Endothelial cell of umbilical vein (primary cell): ENCODE measurements at regions of chr6 and their contacts with region 1.

Region 1: DNA sequence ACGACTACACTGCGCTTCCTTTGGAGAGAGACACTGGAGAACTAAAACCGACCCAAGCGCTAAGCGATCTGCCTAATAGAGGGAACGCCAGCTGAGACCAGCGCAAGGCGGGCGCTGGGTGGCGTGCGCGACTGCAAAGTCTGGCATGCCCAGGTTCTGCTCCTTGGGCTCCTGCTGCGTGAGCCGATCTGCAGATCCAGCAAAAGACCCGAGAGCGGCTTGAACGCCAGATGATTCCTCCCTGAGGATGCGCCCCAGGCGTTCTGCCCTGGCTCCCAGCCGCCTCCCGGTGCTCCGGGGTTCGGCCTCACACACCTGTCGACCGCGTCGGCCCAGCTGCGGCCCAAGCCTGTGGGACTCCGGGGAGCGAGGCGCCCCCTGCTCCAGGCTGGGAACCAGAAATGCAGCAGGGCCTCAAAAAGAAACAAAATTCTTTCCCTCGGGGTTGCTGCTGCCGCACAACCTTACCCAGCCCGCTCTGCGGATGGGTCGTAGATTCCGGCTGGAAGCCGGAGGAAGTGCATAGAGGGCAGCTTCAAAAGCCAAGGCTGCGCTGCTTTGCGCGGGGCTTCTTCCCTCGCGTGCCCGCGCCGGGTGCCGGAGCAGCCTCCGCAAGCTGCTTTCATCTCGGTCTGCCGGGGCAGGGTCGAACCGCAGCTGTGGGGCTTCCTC is 17.9 kb upstream of the PRDM13 start:
- DNase-seq: peak; percentile 72
- H3K4me3 ChIP-seq: peak overlapping the region; percentile 11 to 40 (median 37)
- H3K27ac ChIP-seq: no peak overlapping the region
- H3K4me1 ChIP-seq: peaks cover 8% of the 10 kb centered on the region
- H3K27me3 ChIP-seq: peaks cover 71 to 77% of the 10 kb centered on the region in 2 experiments
- CTCF ChIP-seq: peak; percentile 36 to 69
- POLR2A ChIP-seq: no peak

Region 2: GRCh38 chr6:98834060-98835031 is 754.4 kb before region 1 on chr6 and contains the start of gene POU3F2:
- CTCF ChIA-PET with region 1: no interaction called
- POLR2A ChIA-PET with region 1: no interaction called
- dilution Hi-C with region 1: no loop called
- intact Hi-C with region 1: loop called (anchors 10 kb)
- DNase-seq: peak; percentile 90
- H3K4me3 ChIP-seq: peak within 1 kb of the TSS; percentile 8 to 40 (median 34)
- H3K27ac ChIP-seq: no peak within 1 kb of the TSS
- H3K4me1 ChIP-seq: peaks cover 9% of the 10 kb centered on the region
- H3K27me3 ChIP-seq: peaks cover 74 to 94% of the 10 kb centered on the region in 2 experiments
- CTCF ChIP-seq: no peak
- POLR2A ChIP-seq: no peak
- total RNA-seq, gene POU3F2: not detected in 2 replicates

Region 3: GRCh38 chr6:99603421-99604165 is 14.8 kb after region 1 on chr6:
- CTCF ChIA-PET with region 1: interaction called, 5 read pairs
- POLR2A ChIA-PET with region 1: no interaction called
- dilution Hi-C with region 1: no loop called
- intact Hi-C with region 1: loop called (anchors 1 kb)
- DNase-seq: peak; percentile 38
- H3K4me3 ChIP-seq: no peak overlapping the region
- H3K27ac ChIP-seq: no peak overlapping the region
- H3K4me1 ChIP-seq: no peaks in the 10 kb centered on the region
- H3K27me3 ChIP-seq: peaks cover 79 to 100% of the 10 kb centered on the region in 2 experiments
- CTCF ChIP-seq: no peak
- POLR2A ChIP-seq: no peak

Region 4: GRCh38 chr6:99637629-99638028 is 48.9 kb after region 1 on chr6:
- CTCF ChIA-PET with region 1: no interaction called
- POLR2A ChIA-PET with region 1: no interaction called
- dilution Hi-C with region 1: no loop called
- intact Hi-C with region 1: no loop called
- DNase-seq: no peak
- H3K4me3 ChIP-seq: no peak overlapping the region
- H3K27ac ChIP-seq: no peak overlapping the region
- H3K4me1 ChIP-seq: no peaks in the 10 kb centered on the region
- H3K27me3 ChIP-seq: peaks cover 3 to 17% of the 10 kb centered on the region in 2 experiments
- CTCF ChIP-seq: no peak
- POLR2A ChIP-seq: no peak